ENCODE measurements at regions of chr13 and their contacts with region 1.

Region 1: GRCh38 chr13:43804461-43805070 is 17.8 kb upstream of the ENOX1 start:
- DNase-seq: peak; percentile 26
- ATAC-seq: no peak
- H3K4me3 Mint-ChIP-seq: no peak overlapping the region
- H3K27ac Mint-ChIP-seq: no peak overlapping the region
- H3K4me1 Mint-ChIP-seq: no peaks in the 10 kb centered on the region
- H3K27me3 Mint-ChIP-seq: peaks cover 9% of the 10 kb centered on the region

Region 2: DNA sequence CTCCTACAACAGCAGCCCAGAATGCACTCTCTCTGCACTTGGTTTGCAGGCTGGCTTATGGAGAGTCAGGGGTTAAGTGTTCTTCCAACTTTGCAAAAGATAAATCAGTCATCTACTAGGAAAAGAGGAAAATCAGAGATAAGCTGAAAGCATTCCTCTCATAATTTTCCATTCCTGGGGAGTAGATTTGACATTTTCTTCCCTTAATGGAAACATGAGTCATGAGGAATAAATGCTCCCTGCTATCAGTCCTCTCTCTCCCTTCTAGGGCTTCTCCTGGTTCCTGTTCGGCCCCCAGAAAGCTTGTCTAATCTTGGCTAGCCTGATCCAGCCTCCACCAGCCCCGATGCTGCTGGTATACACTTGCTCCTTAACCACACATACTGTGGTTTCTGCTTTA is 10.6 kb after region 1 on chr13:
- CTCF ChIA-PET with region 1: interaction called, 15 read pairs
- POLR2A ChIA-PET with region 1: no interaction called
- DNase-seq: no peak
- ATAC-seq: no peak
- H3K4me3 Mint-ChIP-seq: no peak overlapping the region
- H3K27ac Mint-ChIP-seq: no peak overlapping the region
- H3K4me1 Mint-ChIP-seq: no peaks in the 10 kb centered on the region
- H3K27me3 Mint-ChIP-seq: peaks cover 12% of the 10 kb centered on the region

Region 3: GRCh38 chr13:43933378-43933777 is 128.8 kb after region 1 on chr13:
- CTCF ChIA-PET with region 1: no interaction called
- POLR2A ChIA-PET with region 1: no interaction called
- DNase-seq: no peak
- ATAC-seq: no peak
- H3K4me3 Mint-ChIP-seq: no peak overlapping the region
- H3K27ac Mint-ChIP-seq: no peak overlapping the region
- H3K4me1 Mint-ChIP-seq: no peaks in the 10 kb centered on the region
- H3K27me3 Mint-ChIP-seq: peaks cover 9% of the 10 kb centered on the region

Measured in activated CD8-positive, alpha-beta T cell treated with anti-CD3 and anti-CD28 coated beads, Interleukin-2, amount 10 ng/mL, durations not matched to agents 7 days and 5 days (primary cell).